ENCODE measurements at regions of chr19 and their contacts with region 1.

Region 1: DNA sequence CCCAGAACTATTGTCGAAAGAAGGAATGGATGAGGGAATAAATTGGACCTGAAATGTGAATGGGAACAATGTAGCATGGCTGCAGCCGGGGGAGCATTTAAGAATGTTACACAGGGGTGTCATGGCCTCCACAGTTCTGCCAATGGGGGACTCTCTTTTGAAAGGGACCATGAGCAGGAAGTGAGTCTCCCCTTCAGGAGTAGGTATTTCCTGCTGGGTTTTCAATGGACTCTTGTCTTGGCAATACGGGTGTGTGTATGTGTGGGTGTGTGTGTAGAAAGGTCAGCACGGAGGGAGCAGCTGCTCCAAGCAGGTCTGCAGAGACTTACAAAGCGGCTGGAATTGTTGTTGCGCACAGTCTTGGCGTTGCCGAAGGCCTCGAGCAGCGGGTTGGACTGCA is 24.4 kb downstream of the MYO1F start:
- DNase-seq: peak; percentile 80
- H3K4me3 ChIP-seq: no peak overlapping the region
- H3K27ac ChIP-seq: no peak overlapping the region
- H3K4me1 ChIP-seq: no peaks in the 10 kb centered on the region
- H3K27me3 ChIP-seq: no peaks in the 10 kb centered on the region
- CTCF ChIP-seq: no peak

Region 2: DNA sequence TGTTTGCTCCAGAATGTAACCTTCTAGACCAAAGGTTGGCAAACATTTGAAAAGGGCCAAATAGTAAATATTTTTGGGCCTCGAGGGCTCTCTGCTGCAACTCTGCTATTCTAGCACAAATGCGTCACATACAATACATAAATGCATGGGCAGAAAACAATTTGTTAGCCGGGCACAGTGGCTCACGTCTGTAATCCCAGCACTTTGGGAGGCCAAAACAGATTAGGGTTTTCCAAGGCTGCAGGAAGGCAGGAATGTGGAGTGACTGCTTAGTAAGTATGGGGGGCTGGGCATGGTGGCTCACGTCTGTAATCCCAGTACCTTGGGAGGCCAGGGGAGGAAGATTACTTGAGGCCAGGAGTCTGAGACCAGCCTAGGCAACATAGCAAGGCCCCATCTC is 744.7 kb before region 1 on chr19:
- CTCF ChIA-PET with region 1: no interaction called
- POLR2A ChIA-PET with region 1: no interaction called
- intact Hi-C with region 1: no loop called
- DNase-seq: no peak
- H3K4me3 ChIP-seq: no peak overlapping the region
- H3K27ac ChIP-seq: no peak overlapping the region
- H3K4me1 ChIP-seq: no peaks in the 10 kb centered on the region
- H3K27me3 ChIP-seq: peaks cover 15% of the 10 kb centered on the region
- CTCF ChIP-seq: no peak

Region 3: DNA sequence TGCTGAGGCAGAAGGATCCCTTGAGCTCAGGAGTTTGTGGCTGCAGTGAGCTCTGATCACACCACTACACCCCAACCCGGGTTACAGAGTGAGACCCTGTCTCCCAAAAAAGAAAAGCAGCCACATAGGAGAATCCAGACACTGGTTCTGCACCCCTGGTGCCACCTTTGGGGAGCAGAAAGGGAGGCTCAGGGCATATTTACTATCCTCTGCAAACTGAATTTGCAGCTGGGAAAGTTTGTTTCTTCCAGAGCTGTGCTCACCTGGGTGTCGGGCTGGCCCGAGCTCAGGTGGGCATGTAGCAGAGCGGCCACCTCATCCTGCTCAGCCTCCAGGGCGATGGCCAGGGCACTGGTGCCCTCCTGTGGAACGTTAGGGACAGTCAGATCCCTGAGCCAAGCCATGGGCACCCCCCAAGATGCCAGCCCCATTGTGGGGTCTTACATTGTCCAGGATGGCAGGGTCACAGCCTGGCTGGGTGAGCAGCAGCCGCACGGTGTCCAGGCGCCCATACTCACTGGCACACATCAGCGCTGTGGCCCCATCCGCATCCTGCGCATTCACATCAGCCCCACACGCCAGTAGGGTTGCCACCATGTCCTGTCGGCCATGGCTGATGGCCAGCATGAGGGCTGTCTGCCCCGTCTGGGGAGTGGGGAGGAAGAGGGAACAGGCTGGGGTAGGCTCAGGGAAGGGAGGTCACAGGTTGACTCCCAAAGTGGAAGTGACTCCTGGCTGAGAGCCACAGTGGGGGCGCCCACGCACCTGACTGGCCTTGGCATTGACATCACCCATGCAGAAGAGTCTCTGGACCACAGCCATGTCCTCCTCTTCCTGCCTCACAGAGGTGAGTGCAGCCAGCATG is 228.4 kb before region 1 on chr19:
- CTCF ChIA-PET with region 1: no interaction called
- POLR2A ChIA-PET with region 1: no interaction called
- intact Hi-C with region 1: no loop called
- DNase-seq: no peak
- H3K4me3 ChIP-seq: no peak overlapping the region
- H3K27ac ChIP-seq: no peak overlapping the region
- H3K4me1 ChIP-seq: peaks cover 21% of the 10 kb centered on the region
- H3K27me3 ChIP-seq: no peaks in the 10 kb centered on the region
- CTCF ChIP-seq: no peak

Region 4: DNA sequence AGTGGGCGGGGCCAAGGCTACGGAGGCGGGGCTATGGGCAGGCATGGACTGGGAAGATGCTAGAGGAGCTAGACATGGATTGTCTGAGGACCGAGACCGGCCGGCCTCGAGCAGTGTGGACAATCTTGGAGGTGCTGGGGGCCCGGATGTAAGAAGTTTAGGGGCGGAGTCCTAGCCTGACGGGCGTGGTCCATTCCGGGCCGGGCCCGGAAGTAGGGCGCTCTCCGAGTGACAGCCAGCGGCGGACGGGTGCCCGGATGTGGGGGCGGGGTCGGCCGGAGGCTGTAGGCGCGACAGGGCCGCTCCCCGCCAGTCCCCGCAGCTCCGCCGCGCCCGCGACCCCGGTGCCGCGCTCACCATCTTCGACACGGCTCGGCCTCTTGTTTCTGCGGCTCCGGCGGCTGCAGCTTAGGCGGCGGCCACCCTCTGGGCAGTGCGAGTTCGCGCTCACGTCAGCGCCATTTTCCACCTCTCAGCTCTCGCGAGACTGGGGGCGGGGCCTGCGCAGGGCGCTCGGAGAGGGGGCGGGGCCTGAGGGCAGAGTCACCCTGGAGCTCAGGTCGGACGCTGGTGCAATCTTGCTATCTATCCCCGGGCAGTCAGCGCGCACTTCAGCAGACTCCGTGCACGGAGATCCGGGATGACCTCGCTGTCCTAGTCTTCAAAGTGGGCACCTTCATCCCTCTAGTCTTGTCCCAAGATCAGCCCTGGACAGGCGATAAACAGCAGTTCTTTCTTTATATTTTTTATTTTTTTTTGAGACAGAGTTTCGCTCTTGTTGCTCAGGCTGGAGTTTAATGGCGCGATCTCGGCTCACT is 38.9 kb before region 1 on chr19 and contains the start of gene ZNF414:
- CTCF ChIA-PET with region 1: interaction called, 12 read pairs
- POLR2A ChIA-PET with region 1: no interaction called
- intact Hi-C with region 1: no loop called
- DNase-seq: peak; percentile 99
- H3K4me3 ChIP-seq: peak within 1 kb of the TSS; percentile 90
- H3K27ac ChIP-seq: peak within 1 kb of the TSS; percentile 100
- H3K4me1 ChIP-seq: peaks cover 17% of the 10 kb centered on the region
- H3K27me3 ChIP-seq: no peaks in the 10 kb centered on the region
- CTCF ChIP-seq: no peak
- total RNA-seq, gene ZNF414: 26.0 and 26.7 TPM in 2 replicates

Measured in A673 (cell line).